ENCODE measurements at regions of chr16 and their contacts with region 1.

Region 1: DNA sequence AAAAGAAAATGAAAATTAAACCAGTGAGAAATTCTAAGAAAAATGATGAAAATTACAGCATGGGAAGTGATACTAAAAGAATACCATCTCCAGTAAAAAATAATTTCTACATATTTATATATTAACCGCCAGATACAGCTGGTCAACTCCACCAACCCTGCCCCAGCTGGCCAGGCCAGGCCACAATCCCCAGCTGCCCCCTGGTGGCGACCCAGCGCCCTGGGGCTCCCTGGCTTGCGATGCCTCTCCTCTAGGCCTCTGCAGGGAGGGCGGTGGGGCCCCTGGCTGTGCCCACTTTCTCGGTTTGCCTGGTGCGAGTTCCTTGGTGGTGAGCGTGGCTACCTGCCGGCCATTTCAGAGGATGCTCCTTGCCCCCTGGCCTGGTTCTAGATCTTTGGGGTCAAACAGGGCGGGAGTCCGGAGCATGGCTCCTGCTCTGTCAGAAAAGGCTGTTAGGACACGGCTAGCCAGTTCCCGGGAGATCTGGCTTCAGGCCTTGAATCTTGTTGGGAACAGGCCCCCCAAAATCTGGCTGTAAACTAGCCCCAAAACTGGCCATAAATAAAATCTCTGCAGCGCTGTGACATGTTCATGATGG is 14.5 kb downstream of the GLIS2 start:
- DNase-seq: peak; percentile 81 to 87 (median 83)
- ATAC-seq: peak; percentile 98
- H3K4me3 ChIP-seq: no peak overlapping the region
- H3K27ac ChIP-seq: no peak overlapping the region
- H3K4me1 ChIP-seq: peaks cover 4 to 56% of the 10 kb centered on the region in 2 experiments; a peak in 4 of 5 replicates
- H3K27me3 ChIP-seq: no peaks in the 10 kb centered on the region
- CTCF ChIP-seq: peak; percentile 94 to 97 (median 97)
- EP300 ChIP-seq: no peak
- POLR2A ChIP-seq: no peak
- RAD21 ChIP-seq: peak; percentile 95 to 97

Region 2: GRCh38 chr16:3983081-3983520 is 347.3 kb before region 1 on chr16:
- CTCF ChIA-PET with region 1: interaction called, 3 read pairs
- POLR2A ChIA-PET with region 1: interaction called, 3 read pairs
- in situ Hi-C with region 1: loop called (anchors 10 kb)
- intact Hi-C with region 1: loop called (anchors 1 kb)
- DNase-seq: peak; percentile 78 to 82 (median 80)
- ATAC-seq: peak; percentile 99
- H3K4me3 ChIP-seq: no peak overlapping the region
- H3K27ac ChIP-seq: no peak overlapping the region
- H3K4me1 ChIP-seq: peaks cover 0 to 38% of the 10 kb centered on the region in 2 experiments; a peak in 3 of 5 replicates
- H3K27me3 ChIP-seq: peaks cover 61 to 97% of the 10 kb centered on the region in 2 experiments
- CTCF ChIP-seq: peak; percentile 84 to 95 (median 92)
- EP300 ChIP-seq: no peak
- POLR2A ChIP-seq: no peak
- RAD21 ChIP-seq: peak; percentile 74 to 90

Region 3: GRCh38 chr16:4200000-4200780 is 130.2 kb before region 1 on chr16:
- CTCF ChIA-PET with region 1: interaction called, 18 read pairs
- POLR2A ChIA-PET with region 1: interaction called, 5 read pairs
- in situ Hi-C with region 1: loop called (anchors 10 kb)
- intact Hi-C with region 1: loop called (anchors 2 kb)
- DNase-seq: peak; percentile 73 to 80 (median 78)
- ATAC-seq: peak; percentile 96
- H3K4me3 ChIP-seq: no peak overlapping the region
- H3K27ac ChIP-seq: no peak overlapping the region
- H3K4me1 ChIP-seq: peaks cover 4 to 5% of the 10 kb centered on the region in 2 experiments; a peak in 3 of 5 replicates
- H3K27me3 ChIP-seq: peaks cover 12 to 50% of the 10 kb centered on the region in 2 experiments; a peak in 4 of 5 replicates
- CTCF ChIP-seq: peak; percentile 82 to 88 (median 87)
- EP300 ChIP-seq: no peak
- POLR2A ChIP-seq: no peak
- RAD21 ChIP-seq: peak; percentile 83 to 92

Region 4: GRCh38 chr16:4253394-4254150 is 76.8 kb before region 1 on chr16:
- CTCF ChIA-PET with region 1: interaction called, 5 read pairs
- POLR2A ChIA-PET with region 1: no interaction called
- in situ Hi-C with region 1: no loop called
- intact Hi-C with region 1: loop called (anchors 2 kb)
- DNase-seq: peak; percentile 97 to 99 (median 98)
- ATAC-seq: peak; percentile 99
- H3K4me3 ChIP-seq: peak overlapping the region; percentile 55
- H3K27ac ChIP-seq: peak overlapping the region; percentile 81
- H3K4me1 ChIP-seq: peaks cover 12 to 36% of the 10 kb centered on the region in 2 experiments
- H3K27me3 ChIP-seq: no peaks in the 10 kb centered on the region
- CTCF ChIP-seq: no peak
- EP300 ChIP-seq: no peak
- POLR2A ChIP-seq: peak; percentile 96
- RAD21 ChIP-seq: peak; percentile 90 to 93; a peak in 3 of 4 replicates

Region 5: DNA sequence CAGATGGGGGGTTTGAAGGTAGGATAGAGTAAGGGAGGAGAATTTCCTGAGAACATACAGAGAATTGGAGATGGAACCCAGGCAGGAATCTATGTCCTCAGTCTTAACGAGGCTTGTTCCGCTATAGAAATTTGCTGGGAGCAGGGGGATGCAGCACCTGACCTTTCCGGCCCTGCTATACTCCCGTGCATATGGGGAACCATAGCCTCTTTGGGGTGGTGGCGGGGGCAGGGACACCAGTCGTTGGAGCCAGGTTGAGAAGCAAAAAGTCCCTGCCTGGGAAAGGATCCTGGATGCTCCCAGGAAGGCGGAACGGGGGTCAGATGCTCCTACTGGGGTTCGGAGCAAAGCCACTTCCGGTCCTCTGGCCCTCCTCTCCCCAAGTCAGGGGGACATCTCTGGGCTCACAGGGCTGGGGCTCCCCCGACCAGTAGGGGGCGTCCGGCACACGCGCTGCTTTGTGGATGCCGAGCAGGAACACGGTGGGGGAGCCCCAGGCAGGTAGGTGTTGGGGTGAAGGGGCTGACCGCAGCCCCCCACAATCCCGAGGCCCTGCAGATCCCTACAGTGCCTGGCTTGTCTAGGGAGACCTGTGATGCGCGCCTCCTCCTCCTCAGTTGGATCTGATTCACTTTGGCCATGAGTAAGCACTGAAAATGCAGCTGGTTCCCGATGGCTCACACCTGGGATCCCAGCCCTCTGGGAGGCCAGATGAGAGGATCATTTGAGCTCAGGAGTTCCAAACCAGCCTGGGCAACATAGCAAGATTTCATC is 42.0 kb before region 1 on chr16:
- CTCF ChIA-PET with region 1: interaction called, 19 read pairs
- POLR2A ChIA-PET with region 1: interaction called, 3 read pairs
- in situ Hi-C with region 1: loop called (anchors 5 kb)
- intact Hi-C with region 1: loop called (anchors 1 kb)
- DNase-seq: peak; percentile 87 to 89 (median 88)
- ATAC-seq: peak; percentile 98
- H3K4me3 ChIP-seq: no peak overlapping the region
- H3K27ac ChIP-seq: no peak overlapping the region
- H3K4me1 ChIP-seq: peaks cover 3 to 18% of the 10 kb centered on the region in 2 experiments; a peak in 3 of 5 replicates
- H3K27me3 ChIP-seq: peaks cover 0 to 5% of the 10 kb centered on the region in 2 experiments; a peak in 2 of 5 replicates
- CTCF ChIP-seq: peak; percentile 91 to 98 (median 91)
- EP300 ChIP-seq: no peak
- POLR2A ChIP-seq: no peak
- RAD21 ChIP-seq: peak; percentile 76 to 89

Measured in K562 (cell line).